WTC11 (cell line): ENCODE measurements at regions of chr6 and their contacts with region 1.

Region 1: GRCh38 chr6:35552285-35552917 is 39.7 kb upstream of the TULP1 start:
- DNase-seq: peak; percentile 79
- ATAC-seq: peak; percentile 74
- H3K4me3 Mint-ChIP-seq: no peak overlapping the region
- H3K27ac Mint-ChIP-seq: no peak overlapping the region
- H3K4me1 Mint-ChIP-seq: no peaks in the 10 kb centered on the region
- H3K27me3 Mint-ChIP-seq: no peaks in the 10 kb centered on the region
- CTCF ChIP-seq: peak; percentile 92

Region 2: DNA sequence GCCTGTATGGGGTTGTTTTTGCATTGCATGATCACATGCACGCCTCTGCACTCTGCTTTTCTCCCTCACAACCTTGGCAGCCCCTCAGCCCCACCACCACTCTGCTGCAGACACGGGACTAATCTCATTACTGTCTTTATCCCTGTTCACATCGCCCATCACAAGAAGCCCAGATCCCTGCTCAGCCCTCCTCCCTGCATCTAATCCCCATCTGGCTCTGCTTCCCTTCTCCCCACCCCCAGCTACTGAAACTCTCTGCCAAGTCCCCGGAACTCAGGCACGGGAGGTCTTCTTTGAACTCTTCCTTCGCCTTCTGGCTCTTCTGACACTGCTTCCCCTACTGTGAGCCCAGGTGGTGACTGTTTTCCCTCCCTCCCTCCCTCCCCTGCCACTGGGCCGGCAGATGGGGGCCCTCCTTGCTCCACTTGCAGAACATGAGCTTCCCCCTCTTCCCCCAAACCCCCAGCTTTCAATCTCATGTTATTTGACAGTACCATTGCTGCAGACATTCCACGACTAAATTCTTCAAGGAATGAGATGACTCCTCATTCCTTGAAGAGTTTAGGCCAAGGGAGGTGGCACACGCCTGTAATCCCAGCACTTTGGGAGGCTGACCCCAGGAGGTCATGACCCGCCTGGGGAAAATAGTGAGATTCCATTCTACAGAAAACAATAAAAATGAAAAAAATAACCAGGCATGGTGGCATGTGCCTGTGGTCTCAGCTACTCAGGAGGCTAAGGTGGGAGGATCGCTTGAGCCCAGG is 17.8 kb before region 1 on chr6:
- CTCF ChIA-PET with region 1: interaction called, 26 read pairs
- POLR2A ChIA-PET with region 1: interaction called, 3 read pairs
- DNase-seq: no peak
- ATAC-seq: no peak; the same call in 1 of the 2 replicates
- H3K4me3 Mint-ChIP-seq: no peak overlapping the region; the same call in 1 of the 2 replicates
- H3K27ac Mint-ChIP-seq: no peak overlapping the region
- H3K4me1 Mint-ChIP-seq: peaks cover 26% of the 10 kb centered on the region
- H3K27me3 Mint-ChIP-seq: no peaks in the 10 kb centered on the region; the same call in 1 of the 2 replicates
- CTCF ChIP-seq: no peak

Region 3: GRCh38 chr6:35569011-35569461 is 16.6 kb after region 1 on chr6:
- CTCF ChIA-PET with region 1: interaction called, 31 read pairs
- POLR2A ChIA-PET with region 1: no interaction called
- DNase-seq: peak; percentile 66
- ATAC-seq: peak; percentile 95
- H3K4me3 Mint-ChIP-seq: no peak overlapping the region
- H3K27ac Mint-ChIP-seq: no peak overlapping the region
- H3K4me1 Mint-ChIP-seq: peaks cover 15% of the 10 kb centered on the region
- H3K27me3 Mint-ChIP-seq: no peaks in the 10 kb centered on the region
- CTCF ChIP-seq: peak; percentile 45

Region 4: GRCh38 chr6:35757456-35758123 is 205.2 kb after region 1 on chr6:
- CTCF ChIA-PET with region 1: interaction called, 11 read pairs
- POLR2A ChIA-PET with region 1: no interaction called
- DNase-seq: peak; percentile 57
- ATAC-seq: peak; percentile 81
- H3K4me3 Mint-ChIP-seq: no peak overlapping the region
- H3K27ac Mint-ChIP-seq: peak overlapping the region; percentile 86
- H3K4me1 Mint-ChIP-seq: peaks cover 50% of the 10 kb centered on the region
- H3K27me3 Mint-ChIP-seq: no peaks in the 10 kb centered on the region
- CTCF ChIP-seq: no peak